ENCODE measurements at regions of chr20 and their contacts with region 1.

Region 1: DNA sequence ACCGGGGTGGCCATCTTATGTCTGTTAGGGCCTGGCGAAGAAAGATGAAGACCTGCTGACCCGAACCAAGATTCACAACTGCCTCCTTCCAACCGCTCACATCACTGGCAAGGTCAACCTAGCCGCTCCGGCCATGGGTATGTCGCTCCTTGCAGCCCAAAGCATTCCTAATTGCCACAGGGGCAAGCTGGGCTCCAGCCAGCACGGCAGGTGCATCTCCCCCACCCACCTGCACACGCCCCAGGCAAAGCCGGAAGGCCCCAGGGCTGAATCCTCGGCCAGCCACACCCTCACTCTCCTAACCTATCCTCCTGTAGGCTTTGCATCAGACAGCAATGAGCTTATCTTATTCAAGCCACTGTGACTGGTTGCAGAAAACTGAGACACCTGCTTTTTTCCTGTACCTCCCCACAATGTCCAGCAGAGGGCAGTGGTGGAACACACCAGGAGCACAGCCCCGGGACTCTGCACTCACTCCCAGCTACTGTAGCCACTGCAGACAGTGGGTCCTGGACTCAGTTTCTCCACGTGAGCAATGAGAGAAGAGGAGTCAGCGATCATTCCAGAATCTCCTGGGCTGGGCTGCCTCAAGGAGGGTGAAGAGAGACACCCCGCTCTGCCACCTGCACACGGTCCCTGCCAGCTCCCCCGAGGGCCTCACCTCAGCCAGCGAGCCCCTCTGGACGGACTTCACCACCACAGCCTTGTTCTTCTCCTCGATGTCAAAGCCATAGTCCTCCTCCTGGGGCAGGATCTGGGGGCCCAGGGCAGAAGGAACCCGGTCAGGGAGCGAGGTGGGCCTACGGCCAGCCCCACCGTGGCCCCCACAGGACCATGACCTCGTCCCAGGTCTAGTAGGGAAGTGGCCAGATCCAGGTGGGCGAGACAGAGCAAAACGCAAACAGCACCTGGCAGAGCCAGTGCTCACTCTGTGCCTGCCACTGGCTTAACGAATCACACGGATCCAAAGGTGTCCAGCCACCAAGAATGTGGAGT is 170.0 kb downstream of the PREX1 start:
- DNase-seq: peak; percentile 75
- ATAC-seq: peak; percentile 83
- H3K4me3 Mint-ChIP-seq: no peak overlapping the region
- H3K27ac Mint-ChIP-seq: peak overlapping the region; percentile 27
- H3K4me1 Mint-ChIP-seq: peaks cover 12% of the 10 kb centered on the region
- H3K27me3 Mint-ChIP-seq: no peaks in the 10 kb centered on the region

Region 2: DNA sequence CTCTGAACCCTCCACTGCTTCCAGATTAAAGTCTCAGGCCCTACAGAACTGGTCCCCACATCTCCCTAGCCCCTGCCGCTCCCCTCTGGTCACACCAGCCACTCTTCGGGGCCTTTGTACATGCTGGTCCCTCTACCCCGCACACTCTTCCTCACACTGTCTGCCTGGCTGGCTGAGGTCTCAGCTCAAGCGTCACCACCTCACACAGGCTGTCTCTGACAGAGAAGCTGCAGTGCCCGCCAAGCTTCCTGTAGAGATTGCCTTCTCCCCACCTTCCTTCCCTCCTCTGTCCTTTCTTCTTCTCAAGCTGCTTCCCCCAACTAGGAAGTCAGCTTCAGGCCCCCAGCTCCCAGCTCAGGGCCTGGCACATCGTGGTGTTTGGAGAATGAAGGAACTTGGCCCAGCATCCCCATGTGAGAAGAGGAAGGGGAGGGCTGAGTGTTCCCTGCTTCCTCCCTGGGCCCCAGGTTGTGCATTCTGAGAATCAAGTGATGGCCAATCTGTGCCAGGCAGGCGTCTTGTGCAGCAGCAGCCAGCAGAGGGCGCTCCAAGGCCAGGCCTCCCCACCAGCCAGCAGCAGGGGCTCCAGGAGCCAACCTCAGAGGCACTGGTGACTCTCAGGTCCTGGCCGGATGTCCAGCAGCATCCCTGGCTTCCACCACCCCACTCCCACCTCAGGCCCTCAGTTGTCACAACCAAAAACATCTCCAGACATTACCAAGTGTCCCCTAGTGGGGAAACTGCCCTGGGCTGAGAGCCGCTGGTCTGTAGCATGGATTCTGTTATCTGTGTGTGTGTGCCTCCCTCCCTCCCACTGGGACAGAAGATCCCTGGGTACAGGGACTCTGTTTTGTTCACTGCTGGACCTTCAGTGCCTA is 22.1 kb before region 1 on chr20:
- CTCF ChIA-PET with region 1: interaction called, 12 read pairs
- DNase-seq: peak; percentile 74
- ATAC-seq: peak; percentile 70
- H3K4me3 Mint-ChIP-seq: no peak overlapping the region
- H3K27ac Mint-ChIP-seq: peak overlapping the region; percentile 54
- H3K4me1 Mint-ChIP-seq: peaks cover 39% of the 10 kb centered on the region
- H3K27me3 Mint-ChIP-seq: no peaks in the 10 kb centered on the region

Region 3: DNA sequence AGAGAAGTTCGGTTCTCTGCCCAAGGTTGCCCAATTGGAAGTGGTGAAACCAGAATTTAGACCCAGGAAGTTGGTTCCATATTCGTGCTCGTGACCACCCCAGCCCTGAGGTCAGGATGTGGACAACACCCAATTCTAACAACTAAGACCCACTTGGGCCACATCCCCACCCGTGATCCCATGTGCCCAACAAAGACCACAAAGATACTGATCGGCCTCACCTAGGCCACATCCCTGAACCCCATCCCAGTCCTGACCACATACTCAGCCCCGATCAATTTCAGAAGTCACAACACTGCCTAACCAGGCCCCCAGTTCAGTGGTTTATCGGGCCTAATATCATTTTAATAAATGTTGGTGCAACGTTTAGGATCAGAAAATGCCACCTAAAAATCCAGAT is 31.6 kb after region 1 on chr20:
- CTCF ChIA-PET with region 1: interaction called, 16 read pairs
- DNase-seq: peak; percentile 72
- ATAC-seq: peak; percentile 45
- H3K4me3 Mint-ChIP-seq: peak overlapping the region; percentile 14
- H3K27ac Mint-ChIP-seq: peak overlapping the region; percentile 58
- H3K4me1 Mint-ChIP-seq: peaks cover 48% of the 10 kb centered on the region
- H3K27me3 Mint-ChIP-seq: no peaks in the 10 kb centered on the region

Region 4: GRCh38 chr20:48717095-48717672 is 59.4 kb after region 1 on chr20:
- CTCF ChIA-PET with region 1: interaction called, 13 read pairs
- DNase-seq: peak; percentile 54
- ATAC-seq: peak; percentile 26
- H3K4me3 Mint-ChIP-seq: peak overlapping the region; percentile 34
- H3K27ac Mint-ChIP-seq: peak overlapping the region; percentile 97
- H3K4me1 Mint-ChIP-seq: peaks cover 94% of the 10 kb centered on the region
- H3K27me3 Mint-ChIP-seq: no peaks in the 10 kb centered on the region

Region 5: DNA sequence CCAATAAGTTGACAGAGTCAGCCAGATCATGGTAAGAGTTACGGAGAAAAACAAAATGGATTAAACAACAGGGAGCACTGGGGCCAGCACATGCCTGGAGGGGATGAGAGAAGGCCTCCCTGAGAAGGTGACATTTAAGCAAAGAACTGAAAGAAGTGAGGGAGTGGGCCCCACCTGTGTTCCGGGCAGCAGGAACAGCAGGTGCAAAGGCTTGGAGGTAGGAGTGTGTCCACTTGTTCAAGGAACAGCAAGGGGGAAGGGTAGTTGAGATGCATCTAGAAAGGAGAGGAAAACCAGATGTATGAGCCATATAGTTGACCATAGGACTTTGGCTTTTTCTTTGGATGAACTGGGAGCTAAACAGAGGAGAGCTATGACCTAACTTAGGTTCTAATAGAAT is 177.6 kb after region 1 on chr20:
- CTCF ChIA-PET with region 1: no interaction called
- DNase-seq: no peak
- ATAC-seq: no peak
- H3K4me3 Mint-ChIP-seq: no peak overlapping the region
- H3K27ac Mint-ChIP-seq: no peak overlapping the region
- H3K4me1 Mint-ChIP-seq: no peaks in the 10 kb centered on the region
- H3K27me3 Mint-ChIP-seq: peaks cover 20% of the 10 kb centered on the region

Region 6: GRCh38 chr20:48897246-48897994 is 239.6 kb after region 1 on chr20:
- CTCF ChIA-PET with region 1: interaction called, 17 read pairs
- DNase-seq: no peak
- ATAC-seq: no peak
- H3K4me3 Mint-ChIP-seq: no peak overlapping the region
- H3K27ac Mint-ChIP-seq: no peak overlapping the region
- H3K4me1 Mint-ChIP-seq: no peaks in the 10 kb centered on the region
- H3K27me3 Mint-ChIP-seq: peaks cover 21% of the 10 kb centered on the region